ENCODE measurements at regions of chr10 and their contacts with region 1.

Region 1: GRCh38 chr10:32980558-32981468 is 22.8 kb upstream of the ITGB1 start:
- DNase-seq: peak; percentile 89
- H3K4me3 Mint-ChIP-seq: peak overlapping the region; percentile 88
- H3K27ac Mint-ChIP-seq: peak overlapping the region; percentile 93
- H3K4me1 Mint-ChIP-seq: peaks cover 42% of the 10 kb centered on the region
- H3K27me3 Mint-ChIP-seq: no peaks in the 10 kb centered on the region

Region 2: DNA sequence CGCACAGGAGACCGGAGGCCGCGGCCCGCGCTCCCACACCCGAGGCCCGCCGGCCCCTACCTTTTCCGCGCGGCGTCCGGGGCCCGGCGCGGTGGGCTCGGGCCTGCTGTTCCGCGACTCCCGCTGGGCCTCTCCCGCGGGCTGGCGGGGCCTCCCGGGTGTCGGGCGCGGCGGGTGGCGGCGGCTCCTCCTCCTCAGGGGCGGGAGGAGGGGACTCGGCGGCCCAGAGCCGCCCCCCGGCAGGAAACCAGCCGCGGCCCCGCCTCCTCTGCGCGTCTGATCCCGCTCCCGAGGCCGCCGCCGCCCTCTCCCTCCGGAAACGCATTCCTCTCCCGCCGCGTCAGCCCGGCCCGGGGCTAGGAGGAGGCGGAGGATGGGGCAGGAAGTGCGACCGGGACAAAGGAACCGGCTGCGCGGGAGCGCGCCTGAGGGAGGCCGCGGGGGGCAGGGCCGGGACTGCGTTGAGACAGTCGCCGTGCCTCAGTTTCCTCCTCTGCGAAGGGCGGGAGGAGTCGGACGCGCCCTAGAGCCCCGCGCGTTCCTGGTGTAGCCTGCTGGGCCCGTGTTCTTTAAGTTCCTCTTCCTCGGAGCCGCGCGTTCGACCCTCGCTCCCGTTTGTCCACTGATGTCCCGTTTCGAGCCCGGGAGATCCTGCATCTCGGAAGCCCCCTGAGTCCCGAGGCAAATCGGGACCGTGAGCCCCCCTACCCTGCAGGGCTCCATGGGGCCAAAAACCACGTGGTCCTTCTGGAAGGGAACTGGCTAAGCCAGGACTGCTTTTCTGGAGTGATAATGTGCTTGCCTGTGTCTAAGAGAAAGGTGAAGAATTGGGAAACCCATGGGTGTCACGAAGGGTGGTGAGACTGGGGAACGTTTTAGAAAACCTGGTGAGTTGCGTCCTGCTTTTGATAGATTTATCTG is 22.5 kb before region 1 on chr10 and contains the start of gene ITGB1:
- CTCF ChIA-PET with region 1: interaction called, 7 read pairs
- POLR2A ChIA-PET with region 1: interaction called, 100 read pairs
- DNase-seq: peak; percentile 88
- H3K4me3 Mint-ChIP-seq: peak within 1 kb of the TSS; percentile 82
- H3K27ac Mint-ChIP-seq: peak within 1 kb of the TSS; percentile 82
- H3K4me1 Mint-ChIP-seq: peaks cover 46% of the 10 kb centered on the region
- H3K27me3 Mint-ChIP-seq: no peaks in the 10 kb centered on the region
- total RNA-seq, gene ITGB1: 233 to 242 TPM